ENCODE measurements at regions of chr3 and their contacts with region 1.

Region 1: GRCh38 chr3:126475413-126476114 is at the start of gene ZXDC:
- H3K4me3 Mint-ChIP-seq: peak within 1 kb of the TSS; percentile 80
- H3K27ac Mint-ChIP-seq: peak within 1 kb of the TSS; percentile 87
- H3K4me1 Mint-ChIP-seq: peaks cover 42% of the 10 kb centered on the region
- H3K27me3 Mint-ChIP-seq: no peaks in the 10 kb centered on the region

Region 2: GRCh38 chr3:126357295-126358037 is 118.1 kb before region 1 on chr3 and contains the start of gene KLF15:
- intact Hi-C with region 1: loop called (anchors 10 kb)
- H3K4me3 Mint-ChIP-seq: peak within 1 kb of the TSS; percentile 72
- H3K27ac Mint-ChIP-seq: peak within 1 kb of the TSS; percentile 34
- H3K4me1 Mint-ChIP-seq: peaks cover 16% of the 10 kb centered on the region
- H3K27me3 Mint-ChIP-seq: peaks cover 73% of the 10 kb centered on the region

Region 3: GRCh38 chr3:126558336-126559071 is 82.9 kb after region 1 on chr3 and contains the start of gene C3orf22:
- intact Hi-C with region 1: no loop called
- H3K4me3 Mint-ChIP-seq: no peak within 1 kb of the TSS
- H3K27ac Mint-ChIP-seq: no peak within 1 kb of the TSS
- H3K4me1 Mint-ChIP-seq: no peaks in the 10 kb centered on the region
- H3K27me3 Mint-ChIP-seq: peaks cover 2% of the 10 kb centered on the region

Region 4: GRCh38 chr3:127135241-127136023 is 659.9 kb after region 1 on chr3:
- intact Hi-C with region 1: no loop called
- H3K4me3 Mint-ChIP-seq: no peak overlapping the region
- H3K27ac Mint-ChIP-seq: no peak overlapping the region
- H3K4me1 Mint-ChIP-seq: peaks cover 5% of the 10 kb centered on the region
- H3K27me3 Mint-ChIP-seq: peaks cover 61% of the 10 kb centered on the region

Measured in dendritic cell treated with granulocyte-macrophage colony-stimulating factor and Interleukin-4, amounts not matched to agents 40 ng/mL and 50 ng/mL, for 4 days (primary cell).